ENCODE measurements at regions of chr17 and their contacts with region 1.

Region 1: GRCh38 chr17:82502207-82502606 is 17.3 kb upstream of the FOXK2 start:
- DNase-seq: peak; percentile 77
- H3K4me3 ChIP-seq: no peak overlapping the region
- H3K27ac ChIP-seq: no peak overlapping the region
- H3K4me1 ChIP-seq: peaks cover 10% of the 10 kb centered on the region
- H3K27me3 ChIP-seq: no peaks in the 10 kb centered on the region
- CTCF ChIP-seq: no peak

Region 2: DNA sequence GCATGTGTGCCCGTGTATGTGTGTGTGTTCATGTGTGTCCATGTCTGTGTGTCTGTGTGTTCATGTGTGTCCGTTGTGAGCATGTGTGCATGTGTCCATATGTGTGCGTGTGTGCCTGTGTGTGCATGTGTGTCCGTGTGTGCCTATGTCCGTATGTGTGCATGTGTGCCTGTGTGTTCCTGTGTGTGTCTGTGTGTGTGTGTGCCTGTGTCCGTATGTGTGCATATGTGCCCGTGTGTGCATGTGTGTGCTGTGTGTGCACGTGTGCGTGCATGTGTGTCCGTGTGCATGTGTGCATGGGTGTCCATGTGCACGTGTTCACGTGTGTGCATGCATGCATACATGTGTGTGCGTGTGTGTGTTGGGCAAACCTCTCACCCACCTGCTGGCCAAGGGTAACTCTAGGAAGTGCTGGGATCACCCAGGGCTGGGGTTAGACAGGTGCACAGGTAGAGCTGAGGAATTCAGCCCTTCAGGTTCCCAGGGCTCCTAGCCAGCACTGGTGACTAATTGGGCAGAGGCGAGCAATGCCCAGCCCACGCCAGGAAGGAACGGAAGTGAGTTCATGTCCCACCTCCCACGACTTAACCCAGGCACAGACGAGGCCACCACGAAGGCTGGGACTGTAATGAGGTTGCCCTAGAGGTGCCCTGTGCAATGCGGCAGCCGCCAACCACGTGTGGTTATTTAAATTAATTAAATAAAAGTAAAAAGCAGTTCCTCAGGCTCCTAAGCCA is 220.5 kb before region 1 on chr17:
- CTCF ChIA-PET with region 1: no interaction called
- dilution Hi-C with region 1: loop called (anchors 5 kb)
- in situ Hi-C with region 1: no loop called
- intact Hi-C with region 1: no loop called
- DNase-seq: peak; percentile 92
- H3K4me3 ChIP-seq: no peak overlapping the region
- H3K27ac ChIP-seq: peak overlapping the region; percentile 65
- H3K4me1 ChIP-seq: peaks cover 42% of the 10 kb centered on the region
- H3K27me3 ChIP-seq: no peaks in the 10 kb centered on the region
- CTCF ChIP-seq: no peak

Region 3: DNA sequence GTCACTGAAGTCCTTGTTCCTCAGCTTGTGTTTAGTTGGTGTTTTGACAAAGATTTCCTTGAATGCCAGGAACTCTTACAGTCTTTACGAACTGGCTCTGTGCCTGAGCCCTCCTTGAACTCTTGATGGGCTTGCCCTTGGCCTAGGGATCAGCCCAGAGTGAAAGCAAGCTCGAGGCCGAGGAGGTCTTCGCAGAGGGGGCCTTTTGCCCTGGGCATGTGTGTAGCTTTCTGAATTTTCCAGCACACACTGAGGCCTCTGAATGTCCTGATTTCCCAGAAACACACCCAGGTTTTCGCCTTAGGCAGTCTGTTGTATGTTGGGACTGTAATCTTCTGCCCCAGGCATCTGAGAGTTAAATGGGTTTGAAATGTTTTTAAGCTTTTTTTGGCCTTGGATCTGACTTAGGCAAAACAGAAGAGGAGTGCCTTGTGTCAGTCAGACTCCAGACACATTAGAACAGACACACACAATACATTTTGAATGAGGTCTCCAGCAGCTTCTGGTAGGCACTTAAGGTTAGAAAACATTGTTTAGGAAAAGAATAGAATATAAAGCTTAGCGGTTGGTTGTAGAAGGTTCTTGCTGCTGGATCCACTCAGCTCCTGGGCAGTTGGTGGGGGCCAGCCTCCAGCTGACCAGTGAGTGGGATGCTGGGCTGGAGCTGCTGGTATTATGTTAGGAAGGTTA is 34.5 kb after region 1 on chr17:
- CTCF ChIA-PET with region 1: no interaction called
- dilution Hi-C with region 1: loop called (anchors 5 kb)
- in situ Hi-C with region 1: no loop called
- intact Hi-C with region 1: no loop called
- DNase-seq: peak; percentile 32
- H3K4me3 ChIP-seq: no peak overlapping the region
- H3K27ac ChIP-seq: peak overlapping the region; percentile 82
- H3K4me1 ChIP-seq: peaks cover 41% of the 10 kb centered on the region
- H3K27me3 ChIP-seq: no peaks in the 10 kb centered on the region
- CTCF ChIP-seq: no peak

Region 4: DNA sequence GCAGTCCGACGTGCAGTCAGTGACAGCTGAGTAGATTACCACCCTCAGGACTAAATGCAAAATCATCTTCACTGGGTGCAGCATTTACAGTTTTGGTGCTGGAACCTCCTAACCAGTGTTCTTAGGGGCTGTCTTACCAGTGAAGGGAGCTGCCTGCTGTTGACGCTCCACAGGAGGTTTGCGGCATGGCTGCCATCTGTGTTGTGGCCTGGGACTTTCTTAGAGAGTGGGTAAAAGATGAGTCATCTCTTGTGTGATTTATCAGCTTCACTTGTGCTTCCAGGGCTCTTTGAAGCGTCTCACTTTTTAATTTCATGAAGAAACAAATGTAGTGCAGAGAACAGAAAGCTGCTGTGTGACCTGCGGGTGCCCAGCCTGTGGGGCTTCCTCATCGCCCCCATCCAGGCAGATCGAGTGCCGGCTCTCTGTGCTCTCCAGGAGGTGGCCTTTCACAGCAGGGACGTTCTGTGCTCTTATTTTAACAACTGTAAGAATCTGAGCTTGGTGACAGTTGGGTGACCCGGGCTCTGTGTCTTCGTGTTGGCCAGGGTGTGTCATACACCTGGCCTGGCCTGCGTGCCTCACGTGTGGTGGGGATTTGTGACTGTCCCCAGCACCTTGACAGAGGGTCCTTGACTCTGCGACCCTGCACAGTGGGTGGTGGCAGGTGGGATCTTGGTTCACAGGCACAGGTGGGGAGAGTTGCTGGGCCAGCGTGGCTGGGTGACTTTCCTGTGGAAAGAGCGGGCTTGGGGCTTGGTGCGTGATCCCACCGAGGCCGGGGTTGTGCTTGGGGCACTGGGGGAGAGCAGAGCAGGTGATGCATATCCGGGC is 362.0 kb after region 1 on chr17:
- CTCF ChIA-PET with region 1: no interaction called
- dilution Hi-C with region 1: no loop called
- in situ Hi-C with region 1: no loop called
- intact Hi-C with region 1: no loop called
- DNase-seq: peak; percentile 57
- H3K4me3 ChIP-seq: no peak overlapping the region
- H3K27ac ChIP-seq: no peak overlapping the region
- H3K4me1 ChIP-seq: peaks cover 16% of the 10 kb centered on the region
- H3K27me3 ChIP-seq: no peaks in the 10 kb centered on the region
- CTCF ChIP-seq: no peak

Measured in mammary epithelial cell (primary cell).